Transverse colon (tissue), 4 donors: ENCODE measurements at regions of chr22 and their contacts with region 1.

Region 1: DNA sequence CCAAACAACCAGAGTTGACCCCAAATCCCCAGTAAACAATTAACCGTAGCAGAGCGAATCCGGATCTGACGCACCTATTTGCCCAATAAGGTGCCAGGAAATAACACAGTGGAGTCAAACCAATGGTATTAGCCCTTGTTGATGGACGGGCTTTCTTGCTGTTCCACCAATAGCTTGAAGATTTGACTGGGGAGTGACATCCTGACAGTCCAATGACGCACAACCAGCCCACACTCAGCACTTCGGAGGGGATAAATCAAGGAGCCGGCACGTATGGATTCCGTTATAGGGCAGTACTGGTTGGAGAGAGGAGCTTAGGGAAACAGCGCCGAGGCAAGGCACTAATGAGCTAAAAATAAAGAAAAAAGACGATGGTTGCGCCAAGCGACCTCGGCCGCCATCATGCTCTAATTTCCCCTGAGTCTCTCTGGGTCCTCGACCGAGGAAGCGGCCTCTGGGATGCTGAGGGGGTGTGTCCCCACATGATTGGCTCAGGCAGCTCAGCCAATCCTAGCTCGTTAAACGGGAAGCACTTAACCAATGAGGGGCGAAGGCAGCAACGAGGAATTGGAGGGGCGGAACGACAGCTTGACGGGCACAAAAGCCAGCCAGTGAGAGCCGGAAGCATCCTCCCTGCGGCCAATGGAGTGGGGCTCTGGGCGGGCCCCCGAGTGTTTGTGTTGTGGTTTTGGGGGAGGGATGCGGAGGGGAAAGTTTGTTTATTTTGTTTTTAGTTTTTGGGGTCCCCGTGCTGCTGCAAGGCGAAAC is 49.5 kb downstream of the FAM83F start:
- DNase-seq: peak; percentile 98
- H3K4me3 ChIP-seq: peak overlapping the region; percentile 73 to 87 (median 80)
- H3K27ac ChIP-seq: peak overlapping the region; percentile 93 to 96 (median 94)
- H3K4me1 ChIP-seq: peaks cover 12 to 30% (median 16%) of the 10 kb centered on the region in 4 donors
- H3K27me3 ChIP-seq: peaks cover 3% of the 10 kb centered on the region
- CTCF ChIP-seq: no peak
- EP300 ChIP-seq: no peak
- POLR2A ChIP-seq: peak; percentile 91

Region 2: GRCh38 chr22:39927544-39927943 is 116.7 kb before region 1 on chr22:
- in situ Hi-C with region 1: no loop called
- intact Hi-C with region 1: no loop called
- DNase-seq: no peak
- H3K4me3 ChIP-seq: no peak overlapping the region
- H3K27ac ChIP-seq: peak overlapping the region in 1 of 4 donors; percentile 18
- H3K4me1 ChIP-seq: peaks cover 0 to 29% (median 7%) of the 10 kb centered on the region in 4 donors
- H3K27me3 ChIP-seq: peaks cover 9% of the 10 kb centered on the region
- CTCF ChIP-seq: no peak
- EP300 ChIP-seq: no peak
- POLR2A ChIP-seq: no peak

Region 3: DNA sequence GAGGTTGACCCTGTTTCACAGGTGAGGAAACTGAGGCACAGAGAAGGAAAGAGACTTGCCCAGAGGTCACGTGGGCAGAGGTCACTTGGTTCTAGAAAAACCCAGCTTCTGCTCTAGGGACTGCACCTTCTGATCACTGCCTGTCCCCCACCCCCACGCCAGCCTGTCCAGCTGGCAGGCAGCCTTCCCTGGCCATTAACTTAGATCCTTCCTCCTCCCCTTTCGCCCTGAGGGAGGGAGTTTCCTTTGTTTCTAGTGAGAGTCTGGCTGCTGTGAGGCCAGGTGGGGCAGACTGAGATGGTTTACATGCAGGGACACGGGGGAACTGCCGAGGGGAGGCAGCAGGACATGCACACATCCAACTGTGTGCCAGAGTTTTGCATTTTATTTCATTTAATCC is 46.3 kb before region 1 on chr22:
- in situ Hi-C with region 1: no loop called
- intact Hi-C with region 1: no loop called
- DNase-seq: peak; percentile 79
- H3K4me3 ChIP-seq: no peak overlapping the region
- H3K27ac ChIP-seq: peak overlapping the region; percentile 81 to 88 (median 86)
- H3K4me1 ChIP-seq: peaks cover 0 to 58% (median 33%) of the 10 kb centered on the region in 4 donors
- H3K27me3 ChIP-seq: peaks cover 28% of the 10 kb centered on the region
- CTCF ChIP-seq: peak in 2 of 5 experiments; percentile 17 to 19
- EP300 ChIP-seq: no peak
- POLR2A ChIP-seq: peak; percentile 54

Region 4: DNA sequence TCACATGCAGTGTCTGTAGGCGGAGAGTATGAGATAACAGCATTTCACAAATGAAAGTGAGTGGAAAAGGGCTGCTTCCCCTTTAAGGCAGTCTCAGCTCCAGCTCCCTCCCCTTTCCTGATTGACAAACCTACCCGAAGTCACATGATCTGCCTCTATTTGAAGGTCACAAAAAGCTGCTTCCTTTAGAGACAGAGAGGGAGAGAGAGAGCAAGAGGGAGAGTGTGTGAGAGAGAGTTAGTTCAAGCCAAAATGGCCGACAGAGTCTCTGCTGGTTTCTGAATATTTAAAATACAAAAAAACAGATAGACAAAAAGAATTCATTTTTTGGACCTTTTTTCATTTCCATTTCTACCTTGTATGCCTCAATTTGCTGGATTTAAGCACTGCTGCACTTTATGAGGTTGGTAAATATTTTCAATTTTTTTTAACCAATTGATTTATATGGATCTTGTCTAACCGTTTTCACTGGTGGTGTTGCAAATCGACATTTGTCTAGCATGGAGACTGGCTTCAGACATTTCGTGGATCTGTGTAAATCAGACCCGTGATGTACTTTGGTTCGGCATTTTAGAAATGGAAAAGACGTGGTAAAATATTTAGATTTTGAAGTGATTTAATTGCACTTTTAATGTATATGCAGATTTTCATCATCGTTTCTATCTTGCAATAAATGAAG is 133.6 kb after region 1 on chr22 and contains the start of gene TNRC6B:
- in situ Hi-C with region 1: loop called in 1 of 4 experiments (anchors 10 kb)
- intact Hi-C with region 1: no loop called
- DNase-seq: peak; percentile 80
- H3K4me3 ChIP-seq: peak within 1 kb of the TSS; percentile 52 to 78 (median 54)
- H3K27ac ChIP-seq: peak within 1 kb of the TSS; percentile 85 to 91 (median 90)
- H3K4me1 ChIP-seq: peaks cover 29 to 62% (median 49%) of the 10 kb centered on the region in 4 donors
- H3K27me3 ChIP-seq: no peaks in the 10 kb centered on the region
- CTCF ChIP-seq: peak in 2 of 5 experiments; percentile 3 to 21
- EP300 ChIP-seq: no peak
- POLR2A ChIP-seq: peak; percentile 99
- total RNA-seq, gene TNRC6B: 36.7 to 108 (median 54.0) TPM

Region 5: DNA sequence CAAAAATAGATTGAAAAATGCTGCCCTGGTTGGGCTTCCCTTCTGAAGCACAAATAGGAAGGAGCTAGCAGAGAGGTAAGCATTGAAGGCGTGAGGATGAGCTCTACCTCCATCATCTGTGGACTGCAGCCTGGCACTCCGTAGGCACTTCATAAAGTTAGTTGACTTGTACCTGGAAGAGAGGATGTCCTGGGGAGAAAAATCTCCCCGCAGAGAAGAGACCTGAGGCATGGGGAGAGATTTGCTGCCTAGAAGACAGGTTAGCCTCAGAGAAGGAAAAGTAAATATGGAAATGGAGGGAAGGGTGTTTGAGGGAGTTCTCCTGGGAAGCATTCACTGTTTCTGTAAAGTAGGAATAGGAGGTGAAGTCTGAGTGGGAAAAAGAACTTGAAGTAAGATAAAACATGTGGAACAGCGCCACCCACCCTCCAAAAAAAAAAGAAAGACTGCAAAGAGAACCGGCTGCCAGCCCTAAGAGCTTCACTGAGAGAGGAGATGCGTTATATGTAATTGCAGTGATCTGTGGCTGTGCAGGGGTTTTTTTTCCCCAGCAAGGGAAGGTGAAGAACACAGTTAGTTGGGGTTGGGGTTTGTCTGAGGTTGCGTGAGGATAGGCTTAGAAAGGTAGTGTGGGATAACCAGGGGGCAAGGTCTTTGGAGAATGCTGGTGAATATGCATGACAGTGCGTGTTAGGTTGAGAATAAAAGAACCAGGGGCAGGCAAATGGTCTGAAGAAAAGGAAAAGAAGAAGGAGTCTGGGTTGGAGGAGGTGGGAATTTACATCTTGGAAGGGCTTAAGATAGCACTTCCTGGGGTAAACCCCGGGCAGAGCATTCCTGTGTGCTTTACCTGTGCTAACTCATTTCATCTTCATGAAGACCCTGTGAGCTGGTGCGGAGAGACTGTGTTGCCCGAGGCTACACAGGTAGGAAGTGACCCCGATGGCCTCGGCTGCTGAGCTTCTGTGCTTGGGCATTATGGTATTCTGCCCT is 149.4 kb after region 1 on chr22:
- in situ Hi-C with region 1: no loop called
- intact Hi-C with region 1: loop called (anchors 10 kb)
- DNase-seq: no peak
- H3K4me3 ChIP-seq: no peak overlapping the region
- H3K27ac ChIP-seq: peak overlapping the region in 3 of 4 donors; percentile 19 to 79 (median 70)
- H3K4me1 ChIP-seq: peaks cover 30 to 76% (median 48%) of the 10 kb centered on the region in 4 donors
- H3K27me3 ChIP-seq: no peaks in the 10 kb centered on the region
- CTCF ChIP-seq: peak in 2 of 5 experiments; percentile 21 to 25
- EP300 ChIP-seq: no peak
- POLR2A ChIP-seq: no peak

Region 6: GRCh38 chr22:40346178-40347118 is 302.2 kb after region 1 on chr22 and contains the start of gene ADSL:
- in situ Hi-C with region 1: loop called in 2 of 4 experiments (anchors 10 kb)
- intact Hi-C with region 1: no loop called
- DNase-seq: peak; percentile 92
- H3K4me3 ChIP-seq: peak within 1 kb of the TSS; percentile 54 to 75 (median 58)
- H3K27ac ChIP-seq: peak within 1 kb of the TSS; percentile 84 to 95 (median 92)
- H3K4me1 ChIP-seq: peaks cover 0 to 33% (median 24%) of the 10 kb centered on the region in 4 donors
- H3K27me3 ChIP-seq: no peaks in the 10 kb centered on the region
- CTCF ChIP-seq: peak in 2 of 5 experiments; percentile 28 to 45
- EP300 ChIP-seq: peak; percentile 22
- POLR2A ChIP-seq: peak; percentile 89
- total RNA-seq, gene ADSL: 13.5 to 70.7 (median 41.8) TPM